ENCODE measurements at regions of chr20 and their contacts with region 1.

Region 1: DNA sequence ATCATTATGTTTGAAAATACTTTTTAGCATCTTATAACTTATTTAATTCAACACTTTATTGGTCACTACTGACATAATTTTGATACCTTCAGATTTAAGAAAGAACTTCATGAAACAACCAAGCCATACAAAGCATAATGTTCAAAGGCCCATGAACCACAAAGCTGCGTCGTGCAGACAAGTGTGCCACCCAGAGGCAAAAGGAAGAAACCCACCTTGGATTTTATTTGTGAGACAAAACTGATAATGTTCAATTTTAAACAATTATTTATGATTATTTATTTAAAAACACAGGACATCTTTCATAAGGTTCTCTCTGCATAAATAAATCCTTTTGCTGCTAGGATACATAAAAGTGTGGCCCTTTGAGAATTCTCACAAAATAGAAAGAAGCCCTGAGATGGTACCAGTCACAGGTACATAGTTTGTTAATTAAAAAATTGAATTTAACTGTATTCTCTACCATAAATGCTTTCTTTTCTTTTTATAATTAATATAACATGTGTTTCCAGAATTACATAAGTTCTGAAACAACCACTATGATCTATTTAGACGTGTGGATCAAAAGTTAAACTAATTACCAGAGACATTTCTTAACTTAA is 143.7 kb downstream of the RALGAPA2 start:
- DNase-seq: no peak
- ATAC-seq: peak; percentile 62 to 76 (median 68)
- H3K4me3 ChIP-seq: no peak overlapping the region
- H3K27ac ChIP-seq: no peak overlapping the region
- H3K4me1 ChIP-seq: peaks cover 0 to 10% (median 0%) of the 10 kb centered on the region in 4 donors
- H3K27me3 ChIP-seq: no peaks in the 10 kb centered on the region
- CTCF ChIP-seq: peak; percentile 40 to 77 (median 66)
- POLR2A ChIP-seq: no peak

Region 2: DNA sequence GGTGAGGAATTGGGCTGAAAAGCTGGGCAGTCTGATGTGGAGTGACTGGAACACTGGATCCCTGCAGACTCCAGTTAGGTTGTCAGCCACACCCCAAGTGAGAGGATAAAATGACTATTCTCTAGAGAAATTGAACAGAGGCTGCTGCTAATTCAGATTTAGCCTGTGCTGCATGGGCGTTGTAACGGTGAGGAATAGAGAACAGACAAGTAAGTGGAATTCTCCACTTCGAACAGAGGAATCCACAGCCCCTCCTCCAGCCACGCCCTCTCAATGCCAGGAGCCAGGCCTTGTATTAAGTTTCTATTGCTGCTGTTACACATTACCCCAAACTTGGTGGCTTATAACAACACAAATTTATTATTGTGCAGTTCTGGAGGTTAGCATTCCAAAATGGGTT is 407.1 kb before region 1 on chr20:
- intact Hi-C with region 1: no loop called
- DNase-seq: no peak
- ATAC-seq: no peak
- H3K4me3 ChIP-seq: no peak overlapping the region
- H3K27ac ChIP-seq: no peak overlapping the region
- H3K4me1 ChIP-seq: no peaks in the 10 kb centered on the region
- H3K27me3 ChIP-seq: no peaks in the 10 kb centered on the region
- CTCF ChIP-seq: no peak
- POLR2A ChIP-seq: no peak

Region 3: GRCh38 chr20:20360464-20360863 is 208.2 kb before region 1 on chr20:
- intact Hi-C with region 1: loop called in 1 of 2 experiments (anchors 10 kb)
- DNase-seq: no peak
- ATAC-seq: peak; percentile 94 to 98 (median 96)
- H3K4me3 ChIP-seq: no peak overlapping the region
- H3K27ac ChIP-seq: no peak overlapping the region
- H3K4me1 ChIP-seq: peaks cover 0 to 10% (median 0%) of the 10 kb centered on the region in 4 donors
- H3K27me3 ChIP-seq: peaks cover 0 to 20% of the 10 kb centered on the region in 2 donors
- CTCF ChIP-seq: peak; percentile 64 to 71 (median 68)
- POLR2A ChIP-seq: no peak

Region 4: DNA sequence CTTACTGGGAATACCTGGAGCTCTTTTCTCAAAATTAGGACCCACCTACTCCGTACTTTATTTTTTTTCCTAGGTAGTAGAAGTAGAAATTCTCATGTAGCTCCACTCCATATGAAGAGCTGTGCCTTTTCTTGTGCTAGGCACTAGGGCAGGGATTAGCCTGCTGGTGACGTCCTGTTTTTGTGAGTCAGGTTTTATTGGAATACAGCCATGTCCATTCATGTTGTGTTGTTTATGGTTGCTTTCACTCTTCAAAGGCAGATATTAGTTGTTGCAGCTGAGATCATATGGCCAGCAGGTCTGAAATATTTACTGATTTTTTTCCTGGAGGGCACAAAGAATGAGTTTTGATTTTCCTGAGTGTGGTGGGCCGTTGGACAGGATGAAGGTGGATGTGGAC is 754.9 kb after region 1 on chr20:
- intact Hi-C with region 1: no loop called
- DNase-seq: no peak
- ATAC-seq: peak; percentile 45 to 82 (median 60)
- H3K4me3 ChIP-seq: no peak overlapping the region
- H3K27ac ChIP-seq: no peak overlapping the region
- H3K4me1 ChIP-seq: peaks cover 0 to 40% (median 16%) of the 10 kb centered on the region in 4 donors
- H3K27me3 ChIP-seq: no peaks in the 10 kb centered on the region
- CTCF ChIP-seq: no peak
- POLR2A ChIP-seq: no peak